PC-9 (cell line): ENCODE measurements at regions of chr7 and their contacts with region 1.

Region 1: GRCh38 chr7:116762971-116763370 is 91.0 kb downstream of the MET start:
- DNase-seq: no peak
- H3K4me3 ChIP-seq: no peak overlapping the region
- H3K27ac ChIP-seq: no peak overlapping the region
- H3K4me1 ChIP-seq: no peaks in the 10 kb centered on the region
- H3K27me3 ChIP-seq: no peaks in the 10 kb centered on the region
- CTCF ChIP-seq: no peak

Region 2: GRCh38 chr7:116598278-116598677 is 164.7 kb before region 1 on chr7:
- CTCF ChIA-PET with region 1: no interaction called
- POLR2A ChIA-PET with region 1: no interaction called
- intact Hi-C with region 1: no loop called
- DNase-seq: no peak
- H3K4me3 ChIP-seq: no peak overlapping the region
- H3K27ac ChIP-seq: no peak overlapping the region
- H3K4me1 ChIP-seq: no peaks in the 10 kb centered on the region
- H3K27me3 ChIP-seq: no peaks in the 10 kb centered on the region
- CTCF ChIP-seq: no peak

Region 3: GRCh38 chr7:116616555-116617059 is 146.4 kb before region 1 on chr7:
- CTCF ChIA-PET with region 1: no interaction called
- POLR2A ChIA-PET with region 1: no interaction called
- intact Hi-C with region 1: no loop called
- DNase-seq: peak in 1 of 2 experiments; percentile 67
- H3K4me3 ChIP-seq: no peak overlapping the region
- H3K27ac ChIP-seq: no peak overlapping the region
- H3K4me1 ChIP-seq: peaks cover 18% of the 10 kb centered on the region
- H3K27me3 ChIP-seq: no peaks in the 10 kb centered on the region
- CTCF ChIP-seq: no peak

Region 4: DNA sequence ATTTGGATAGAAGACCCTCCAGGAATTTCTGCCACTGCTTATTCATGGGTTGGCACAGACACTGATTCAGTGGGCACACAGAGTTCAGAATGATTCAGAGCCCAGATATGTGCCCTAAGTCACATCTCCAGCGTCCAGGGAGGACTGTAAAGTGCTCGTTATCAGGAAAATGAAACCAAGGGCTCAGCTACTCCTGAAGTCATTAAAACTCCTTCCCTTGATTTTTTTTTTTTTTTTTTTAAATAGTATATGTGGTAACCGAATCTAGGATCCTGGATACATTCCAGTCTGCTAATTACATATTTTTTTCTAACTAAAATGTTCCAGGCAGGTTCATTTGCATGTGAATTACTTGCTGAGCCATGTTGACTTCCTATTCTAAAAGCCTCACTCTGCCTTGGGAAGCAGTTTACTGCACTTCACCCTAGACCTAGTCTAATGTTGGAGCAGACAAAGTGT is 56.3 kb before region 1 on chr7:
- CTCF ChIA-PET with region 1: no interaction called
- POLR2A ChIA-PET with region 1: interaction called, 10 read pairs
- intact Hi-C with region 1: no loop called
- DNase-seq: peak; percentile 71 to 80
- H3K4me3 ChIP-seq: peak overlapping the region; percentile 43; the same call in 1 of the 2 replicates
- H3K27ac ChIP-seq: peak overlapping the region; percentile 82
- H3K4me1 ChIP-seq: peaks cover 67% of the 10 kb centered on the region
- H3K27me3 ChIP-seq: no peaks in the 10 kb centered on the region
- CTCF ChIP-seq: no peak

Region 5: GRCh38 chr7:116741625-116742316 is 21.2 kb before region 1 on chr7:
- CTCF ChIA-PET with region 1: no interaction called
- POLR2A ChIA-PET with region 1: no interaction called
- intact Hi-C with region 1: loop called (anchors 2 kb)
- DNase-seq: no peak
- H3K4me3 ChIP-seq: no peak overlapping the region
- H3K27ac ChIP-seq: no peak overlapping the region
- H3K4me1 ChIP-seq: no peaks in the 10 kb centered on the region
- H3K27me3 ChIP-seq: no peaks in the 10 kb centered on the region
- CTCF ChIP-seq: no peak